ENCODE measurements at regions of chr6 and their contacts with region 1.

Region 1: GRCh38 chr6:105402939-105403935 is at the start of gene PREP:
- DNase-seq: peak; percentile 91
- ATAC-seq: peak; percentile 95
- H3K4me3 Mint-ChIP-seq: peak within 1 kb of the TSS; percentile 85
- H3K27ac Mint-ChIP-seq: peak within 1 kb of the TSS; percentile 86
- H3K4me1 Mint-ChIP-seq: peaks cover 59% of the 10 kb centered on the region
- H3K27me3 Mint-ChIP-seq: peaks cover 4% of the 10 kb centered on the region
- total RNA-seq, gene PREP: 42.3 to 49.0 TPM

Region 2: DNA sequence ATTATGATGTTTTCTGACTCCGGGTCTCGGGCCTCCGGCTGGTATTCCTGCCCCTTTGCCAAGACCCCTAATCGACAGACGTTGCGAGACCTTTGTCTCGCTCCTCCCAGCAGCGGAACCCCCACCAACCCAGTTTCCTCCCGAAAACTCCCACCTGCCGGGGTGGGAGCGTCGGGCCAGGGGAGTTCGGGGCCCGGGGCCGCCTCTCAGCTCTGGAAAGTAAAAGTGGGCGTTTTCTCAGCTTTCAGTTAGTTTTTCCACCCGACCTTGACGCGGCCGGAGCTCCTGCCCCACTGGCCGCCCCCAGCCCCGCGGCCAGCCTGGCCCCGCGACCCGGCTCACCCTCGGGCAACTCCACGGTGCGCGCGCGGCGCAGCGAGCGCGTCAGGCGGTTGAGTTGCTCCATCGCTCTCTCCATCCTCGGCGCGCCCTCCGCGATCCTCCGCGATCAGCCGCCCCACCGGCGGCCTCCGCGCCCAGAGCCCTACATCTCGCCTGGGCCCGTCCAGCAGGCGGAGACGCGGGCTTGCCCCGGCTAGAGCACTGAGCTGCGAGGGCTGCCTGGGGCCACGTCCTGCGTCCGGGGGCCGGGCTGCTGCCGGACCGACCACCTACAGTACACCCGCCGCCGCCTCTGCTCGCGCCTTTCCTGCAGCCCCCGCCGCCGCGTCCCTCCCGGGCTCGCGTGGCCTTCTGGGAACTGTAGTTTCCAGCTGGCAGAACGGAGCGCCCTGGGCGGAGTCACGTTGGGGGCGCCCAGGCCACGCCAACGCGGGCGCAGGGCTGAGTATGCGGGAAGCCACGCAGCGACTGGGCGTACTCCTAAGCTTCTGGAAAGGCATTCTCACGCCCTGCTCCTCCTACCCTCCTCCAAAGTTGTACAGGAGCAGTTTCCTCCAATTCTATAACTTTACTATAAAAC is 543.8 kb before region 1 on chr6 and contains the start of gene HACE1:
- CTCF ChIA-PET with region 1: no interaction called
- POLR2A ChIA-PET with region 1: no interaction called
- intact Hi-C with region 1: loop called in 1 of 2 experiments (anchors 1 kb)
- DNase-seq: peak; percentile 94
- ATAC-seq: peak; percentile 99
- H3K4me3 Mint-ChIP-seq: peak within 1 kb of the TSS; percentile 90
- H3K27ac Mint-ChIP-seq: peak within 1 kb of the TSS; percentile 90
- H3K4me1 Mint-ChIP-seq: peaks cover 19% of the 10 kb centered on the region
- H3K27me3 Mint-ChIP-seq: peaks cover 3% of the 10 kb centered on the region
- total RNA-seq, gene HACE1: 12.1 to 15.7 TPM

Region 3: DNA sequence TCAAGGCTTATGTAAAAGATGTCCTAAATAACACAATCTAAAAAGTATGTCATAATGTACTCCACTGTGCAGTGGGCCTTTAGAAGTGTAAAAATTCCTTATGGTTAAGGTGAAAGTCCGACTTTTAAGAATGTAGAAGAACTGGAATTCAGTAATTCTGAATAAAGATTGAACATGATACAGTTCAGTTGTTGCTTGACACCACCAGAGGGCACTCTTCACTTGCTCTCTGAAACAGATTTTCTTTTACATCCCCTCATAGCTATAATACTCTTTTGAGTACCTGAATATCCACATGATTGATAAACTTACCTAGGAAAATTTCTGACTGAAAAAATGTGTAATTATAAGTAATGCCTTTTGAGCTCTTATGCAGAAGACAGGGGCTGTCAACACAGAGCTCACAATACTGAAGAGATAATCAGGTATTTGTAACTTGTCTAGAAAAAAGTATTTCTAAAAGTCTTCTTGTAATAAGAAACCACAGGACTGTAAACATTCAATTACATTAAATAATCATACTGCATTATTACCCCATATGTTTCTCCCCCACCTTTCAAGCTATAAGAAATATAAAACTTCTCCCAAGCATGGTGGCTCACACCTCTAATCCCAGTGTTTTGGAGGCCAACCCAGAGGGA is 315.5 kb before region 1 on chr6:
- CTCF ChIA-PET with region 1: interaction called, 6 read pairs
- POLR2A ChIA-PET with region 1: no interaction called
- intact Hi-C with region 1: loop called (anchors 1 kb)
- DNase-seq: peak; percentile 49
- ATAC-seq: peak; percentile 36
- H3K4me3 Mint-ChIP-seq: no peak overlapping the region
- H3K27ac Mint-ChIP-seq: no peak overlapping the region
- H3K4me1 Mint-ChIP-seq: no peaks in the 10 kb centered on the region
- H3K27me3 Mint-ChIP-seq: no peaks in the 10 kb centered on the region

Region 4: GRCh38 chr6:105317607-105318533 is 85.4 kb before region 1 on chr6:
- CTCF ChIA-PET with region 1: interaction called, 4 read pairs
- POLR2A ChIA-PET with region 1: no interaction called
- intact Hi-C with region 1: loop called (anchors 1 to 5 kb)
- DNase-seq: peak; percentile 21
- ATAC-seq: no peak
- H3K4me3 Mint-ChIP-seq: no peak overlapping the region
- H3K27ac Mint-ChIP-seq: no peak overlapping the region
- H3K4me1 Mint-ChIP-seq: no peaks in the 10 kb centered on the region
- H3K27me3 Mint-ChIP-seq: no peaks in the 10 kb centered on the region

Region 5: GRCh38 chr6:105484238-105485161 is 81.3 kb after region 1 on chr6:
- CTCF ChIA-PET with region 1: no interaction called
- POLR2A ChIA-PET with region 1: no interaction called
- intact Hi-C with region 1: no loop called
- DNase-seq: no peak
- ATAC-seq: peak; percentile 59
- H3K4me3 Mint-ChIP-seq: no peak overlapping the region
- H3K27ac Mint-ChIP-seq: peak overlapping the region; percentile 16
- H3K4me1 Mint-ChIP-seq: peaks cover 18% of the 10 kb centered on the region
- H3K27me3 Mint-ChIP-seq: peaks cover 11% of the 10 kb centered on the region

Region 6: DNA sequence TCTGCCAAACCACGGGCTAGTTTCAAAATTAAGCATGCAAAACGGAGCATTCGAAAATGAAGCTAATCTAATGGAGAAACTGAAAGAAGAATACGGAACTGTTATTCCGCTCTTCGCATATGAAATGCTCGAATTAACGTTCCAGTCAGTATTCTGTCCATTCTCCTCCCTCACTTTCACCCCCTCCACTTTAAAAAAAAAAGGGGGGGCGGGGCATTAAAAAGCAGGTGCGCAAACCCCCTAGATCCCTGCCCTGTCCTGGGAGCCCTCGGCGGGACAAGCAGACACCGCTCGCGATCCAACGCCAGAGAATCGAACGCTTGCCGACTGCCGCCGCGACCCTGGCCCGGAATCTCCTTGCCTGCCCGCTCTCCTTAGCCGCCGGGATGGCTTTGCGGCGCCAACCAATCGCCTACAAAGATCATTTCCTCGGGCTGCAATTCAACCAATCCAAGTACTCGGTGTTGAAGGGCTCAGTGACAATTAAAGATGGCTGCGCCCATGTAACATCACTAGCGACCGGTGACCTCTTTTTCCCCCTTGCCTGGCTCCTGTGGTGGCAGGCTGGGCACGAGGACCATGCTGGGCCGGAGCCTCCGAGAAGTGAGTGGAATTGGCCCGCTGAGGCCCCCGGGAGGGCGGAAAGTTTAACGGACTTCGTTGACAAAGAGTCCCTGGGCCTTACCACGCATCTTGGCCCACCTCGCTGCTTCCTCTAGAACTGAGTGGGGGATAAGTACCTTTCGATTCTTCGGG is 1226.0 kb after region 1 on chr6 and contains the starts of genes QRSL1 and RTN4IP1:
- CTCF ChIA-PET with region 1: no interaction called
- POLR2A ChIA-PET with region 1: no interaction called
- intact Hi-C with region 1: loop called in 1 of 2 experiments (anchors 5 kb)
- DNase-seq: peak; percentile 90
- ATAC-seq: peak; percentile 91
- H3K4me3 Mint-ChIP-seq: peak within 1 kb of the TSS; percentile 97
- H3K27ac Mint-ChIP-seq: peak within 1 kb of the TSS; percentile 98
- H3K4me1 Mint-ChIP-seq: peaks cover 28% of the 10 kb centered on the region
- H3K27me3 Mint-ChIP-seq: no peaks in the 10 kb centered on the region
- total RNA-seq, gene QRSL1: 15.8 to 17.9 TPM
- total RNA-seq, gene RTN4IP1: 4.8 to 9.3 TPM

Measured in activated CD4-positive, alpha-beta T cell treated with anti-CD3 and anti-CD28 coated beads for 36 hours (primary cell).